ENCODE measurements at regions of chr6 and their contacts with region 1.

Region 1: GRCh38 chr6:83067448-83068413 is at the start of gene DOP1A:
- DNase-seq: peak; percentile 95 to 98 (median 97)
- H3K4me3 ChIP-seq: peak within 1 kb of the TSS; percentile 36 to 96 (median 64)
- H3K27ac ChIP-seq: peak within 1 kb of the TSS; percentile 23 to 91 (median 88)
- H3K4me1 ChIP-seq: peaks cover 3 to 41% of the 10 kb centered on the region in 2 donors
- H3K27me3 ChIP-seq: no peaks in the 10 kb centered on the region
- CTCF ChIP-seq: peak; percentile 90 to 99 (median 96)
- POLR2A ChIP-seq: peak; percentile 19 to 77
- total RNA-seq, gene DOP1A: 12.2 to 33.6 (median 21.2) TPM

Region 2: GRCh38 chr6:83215131-83216047 is 147.7 kb after region 1 on chr6:
- intact Hi-C with region 1: loop called (anchors 10 kb)
- DNase-seq: peak; percentile 61 to 89 (median 68)
- H3K4me3 ChIP-seq: no peak overlapping the region
- H3K27ac ChIP-seq: peak overlapping the region in 1 of 5 donors; percentile 24
- H3K4me1 ChIP-seq: peaks cover 0 to 12% of the 10 kb centered on the region in 2 donors
- H3K27me3 ChIP-seq: no peaks in the 10 kb centered on the region
- CTCF ChIP-seq: peak; percentile 68 to 87 (median 78)
- POLR2A ChIP-seq: no peak

Measured in adrenal gland (tissue), 19 donors.